Activated T-helper 1 cell treated with anti-CD3 and anti-CD28 coated beads, Interleukin-12 subunit alpha, Interleukin-12 subunit beta, Interleukin-2, Interleukin-4 antibody, amounts not matched to agents 30 ng/mL and 10 ng/mL and 1 ng/mL, durations not matched to agents 14 hours and 24 hours and 36 hours (primary cell): ENCODE measurements at regions of chr2 and their contacts with region 1.

Region 1: GRCh38 chr2:120343433-120344105 is 2.4 kb upstream of the INHBB start:
- DNase-seq: peak; percentile 40
- H3K4me3 Mint-ChIP-seq: peak overlapping the region; percentile 33
- H3K27ac Mint-ChIP-seq: no peak overlapping the region
- H3K4me1 Mint-ChIP-seq: peaks cover 13% of the 10 kb centered on the region
- H3K27me3 Mint-ChIP-seq: peaks cover 61% of the 10 kb centered on the region

Region 2: GRCh38 chr2:120436885-120437603 is 93.5 kb after region 1 on chr2:
- intact Hi-C with region 1: loop called (anchors 1 kb)
- DNase-seq: no peak
- H3K4me3 Mint-ChIP-seq: no peak overlapping the region
- H3K27ac Mint-ChIP-seq: no peak overlapping the region
- H3K4me1 Mint-ChIP-seq: no peaks in the 10 kb centered on the region
- H3K27me3 Mint-ChIP-seq: peaks cover 25% of the 10 kb centered on the region

Region 3: DNA sequence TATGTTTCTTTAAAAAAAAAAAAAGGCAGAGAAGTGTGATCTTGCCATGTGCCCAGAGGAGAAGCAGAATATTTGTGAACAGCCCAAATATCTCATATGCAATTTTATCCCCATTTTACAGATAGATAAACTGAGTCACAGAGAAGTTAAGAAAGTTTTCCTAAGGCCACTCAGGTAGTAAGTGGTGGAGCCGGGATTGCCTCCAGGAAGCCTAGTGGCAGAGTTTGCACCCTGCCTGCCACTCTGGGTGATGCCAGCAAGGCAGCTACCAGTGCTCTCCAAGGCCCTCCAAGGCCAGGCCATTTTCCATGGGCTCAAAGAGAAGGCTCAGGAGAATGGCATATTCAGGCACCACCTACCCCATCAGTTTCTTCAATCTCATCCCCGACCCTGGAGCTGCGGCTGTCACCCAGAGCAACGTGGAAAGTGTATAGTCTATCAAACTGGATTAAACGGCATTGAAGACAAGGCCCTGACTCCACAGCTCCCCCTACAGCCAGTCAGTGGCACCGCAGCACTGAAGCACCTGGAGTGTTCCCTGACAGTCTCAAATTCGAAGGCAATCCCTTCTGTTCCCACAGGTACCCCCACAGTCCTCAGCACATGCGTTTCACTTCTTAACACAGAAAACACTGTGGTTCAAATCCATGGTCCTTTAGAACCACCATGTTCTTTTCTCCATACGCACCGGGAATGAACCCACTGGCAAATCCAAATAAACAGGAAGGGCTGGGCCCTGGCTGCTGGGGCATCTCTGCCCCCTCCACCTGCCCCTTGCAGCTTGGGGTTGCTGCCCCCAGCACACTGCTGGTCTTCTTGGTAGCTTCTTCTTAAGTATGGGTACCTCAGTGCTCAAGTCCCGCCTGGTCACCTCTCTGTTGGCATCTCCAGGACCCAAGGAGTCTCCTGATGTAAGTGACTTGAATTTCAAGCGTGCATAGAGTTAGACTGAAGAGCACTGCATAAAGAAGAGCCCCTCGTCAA is 177.7 kb after region 1 on chr2:
- intact Hi-C with region 1: loop called (anchors 5 kb)
- DNase-seq: no peak
- H3K4me3 Mint-ChIP-seq: no peak overlapping the region
- H3K27ac Mint-ChIP-seq: no peak overlapping the region
- H3K4me1 Mint-ChIP-seq: no peaks in the 10 kb centered on the region
- H3K27me3 Mint-ChIP-seq: peaks cover 16% of the 10 kb centered on the region